T-cell (primary cell): ENCODE measurements at regions of chr7 and their contacts with region 1.

Region 1: GRCh38 chr7:93194386-93194785 is 31.9 kb downstream of the HEPACAM2 start:
- DNase-seq: no peak
- ATAC-seq: no peak
- H3K4me3 ChIP-seq: no peak overlapping the region
- H3K4me3 Mint-ChIP-seq: no peak overlapping the region
- H3K27ac ChIP-seq: no peak overlapping the region
- H3K27ac Mint-ChIP-seq: no peak overlapping the region
- H3K4me1 ChIP-seq: no peaks in the 10 kb centered on the region
- H3K4me1 Mint-ChIP-seq: no peaks in the 10 kb centered on the region
- H3K27me3 ChIP-seq: no peaks in the 10 kb centered on the region
- H3K27me3 Mint-ChIP-seq: peaks cover 31 to 39% of the 10 kb centered on the region in 2 donors

Region 2: DNA sequence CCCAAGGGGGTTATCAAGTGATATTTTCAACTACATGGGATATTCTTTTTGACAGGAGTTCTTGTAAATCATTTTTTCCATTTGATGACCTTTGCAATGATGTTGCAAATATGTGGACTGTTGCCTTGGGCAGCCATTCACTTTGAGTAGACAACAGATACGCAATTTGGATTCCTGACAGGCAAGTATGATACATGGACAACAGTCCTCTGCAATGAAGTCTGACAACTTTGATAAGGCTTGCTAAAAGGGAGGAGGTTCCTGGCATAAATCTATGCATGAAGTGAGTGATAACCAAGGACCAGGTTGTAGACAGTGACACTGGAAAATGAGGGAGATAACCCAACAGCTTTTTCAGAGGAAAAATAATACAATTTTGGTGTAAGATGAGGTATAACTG is 1033.1 kb before region 1 on chr7:
- CTCF ChIA-PET with region 1: no interaction called
- POLR2A ChIA-PET with region 1: interaction called in 1 of 2 experiments, 11 read pairs
- DNase-seq: no peak
- ATAC-seq: no peak
- H3K4me3 ChIP-seq: no peak overlapping the region
- H3K4me3 Mint-ChIP-seq: no peak overlapping the region
- H3K27ac ChIP-seq: no peak overlapping the region
- H3K27ac Mint-ChIP-seq: no peak overlapping the region
- H3K4me1 ChIP-seq: no peaks in the 10 kb centered on the region
- H3K4me1 Mint-ChIP-seq: peaks cover 0 to 2% (median 0%) of the 10 kb centered on the region in 3 donors
- H3K27me3 ChIP-seq: peaks cover 0 to 2% of the 10 kb centered on the region in 2 experiments
- H3K27me3 Mint-ChIP-seq: peaks cover 11 to 17% of the 10 kb centered on the region in 2 donors